ENCODE measurements at regions of chr22 and their contacts with region 1.

Region 1: GRCh38 chr22:25447686-25448434 is 116.6 kb upstream of the GRK3 start:
- DNase-seq: peak; percentile 90 to 95 (median 93)
- ATAC-seq: peak; percentile 90
- H3K4me3 ChIP-seq: peak overlapping the region; percentile 73
- H3K27ac ChIP-seq: peak overlapping the region; percentile 68
- H3K4me1 ChIP-seq: peaks cover 0 to 10% of the 10 kb centered on the region in 2 experiments; a peak in 3 of 5 replicates
- H3K27me3 ChIP-seq: no peaks in the 10 kb centered on the region
- CTCF ChIP-seq: peak; percentile 79 to 90 (median 86)
- EP300 ChIP-seq: no peak
- POLR2A ChIP-seq: peak; percentile 69
- RAD21 ChIP-seq: peak; percentile 30; a peak in 2 of 4 replicates

Region 2: GRCh38 chr22:25219948-25220442 is 227.9 kb before region 1 on chr22:
- CTCF ChIA-PET with region 1: no interaction called
- POLR2A ChIA-PET with region 1: no interaction called
- in situ Hi-C with region 1: loop called (anchors 10 kb)
- intact Hi-C with region 1: no loop called
- DNase-seq: no peak
- ATAC-seq: no peak
- H3K4me3 ChIP-seq: no peak overlapping the region
- H3K27ac ChIP-seq: no peak overlapping the region
- H3K4me1 ChIP-seq: no peaks in the 10 kb centered on the region
- H3K27me3 ChIP-seq: peaks cover 0 to 4% of the 10 kb centered on the region in 2 experiments; a peak in 2 of 5 replicates
- CTCF ChIP-seq: no peak
- EP300 ChIP-seq: no peak
- POLR2A ChIP-seq: no peak
- RAD21 ChIP-seq: no peak

Region 3: GRCh38 chr22:25362215-25362882 is 85.5 kb before region 1 on chr22:
- CTCF ChIA-PET with region 1: no interaction called
- POLR2A ChIA-PET with region 1: no interaction called
- in situ Hi-C with region 1: no loop called
- intact Hi-C with region 1: loop called (anchors 10 kb)
- DNase-seq: peak; percentile 60 to 74 (median 70)
- ATAC-seq: peak; percentile 92
- H3K4me3 ChIP-seq: no peak overlapping the region
- H3K27ac ChIP-seq: no peak overlapping the region
- H3K4me1 ChIP-seq: peaks cover 0 to 8% of the 10 kb centered on the region in 2 experiments; a peak in 1 of 5 replicates
- H3K27me3 ChIP-seq: no peaks in the 10 kb centered on the region
- CTCF ChIP-seq: peak; percentile 69 to 83 (median 73)
- EP300 ChIP-seq: no peak
- POLR2A ChIP-seq: no peak
- RAD21 ChIP-seq: peak; percentile 34 to 63; a peak in 3 of 4 replicates

Region 4: GRCh38 chr22:25536589-25536988 is 88.7 kb after region 1 on chr22:
- CTCF ChIA-PET with region 1: no interaction called
- POLR2A ChIA-PET with region 1: no interaction called
- in situ Hi-C with region 1: no loop called
- intact Hi-C with region 1: no loop called
- DNase-seq: no peak
- ATAC-seq: no peak
- H3K4me3 ChIP-seq: no peak overlapping the region
- H3K27ac ChIP-seq: no peak overlapping the region
- H3K4me1 ChIP-seq: no peaks in the 10 kb centered on the region
- H3K27me3 ChIP-seq: peaks cover 0 to 6% of the 10 kb centered on the region in 2 experiments; a peak in 4 of 5 replicates
- CTCF ChIP-seq: no peak
- EP300 ChIP-seq: no peak
- POLR2A ChIP-seq: no peak
- RAD21 ChIP-seq: no peak

Measured in K562 (cell line).